K562 (cell line): ENCODE measurements at regions of chr19 and their contacts with region 1.

Region 1: DNA sequence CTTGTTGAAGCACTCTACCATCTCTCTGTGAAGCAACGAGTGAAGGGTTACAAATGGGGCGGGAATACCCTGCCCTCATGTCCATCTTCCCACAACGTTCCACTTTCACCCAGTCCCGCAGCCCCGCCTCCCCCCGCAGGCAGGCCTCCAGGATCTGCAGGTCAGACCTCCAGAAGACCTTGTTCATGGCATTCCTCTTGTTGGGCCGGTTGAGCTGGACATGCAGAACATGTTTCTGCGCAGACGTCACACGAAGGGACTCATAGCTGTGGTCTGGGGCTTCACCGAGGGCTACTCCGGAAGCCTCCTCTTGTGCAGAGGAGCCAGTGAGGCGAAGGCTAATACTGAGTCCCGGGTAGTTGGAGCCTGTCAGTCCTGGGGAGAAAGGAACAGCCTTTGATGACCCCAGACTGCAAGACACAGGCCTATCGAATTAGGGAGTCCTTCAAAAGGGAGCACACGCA is 420 bp downstream of the ECH1 start:
- DNase-seq: peak in 2 of 4 experiments; percentile 53 to 66
- ATAC-seq: peak; percentile 55
- H3K4me3 ChIP-seq: peak overlapping the region; percentile 39
- H3K27ac ChIP-seq: peak overlapping the region; percentile 82
- H3K4me1 ChIP-seq: peaks cover 13 to 29% of the 10 kb centered on the region in 2 experiments; a peak in 4 of 5 replicates
- H3K27me3 ChIP-seq: no peaks in the 10 kb centered on the region
- CTCF ChIP-seq: no peak
- EP300 ChIP-seq: no peak
- POLR2A ChIP-seq: no peak
- RAD21 ChIP-seq: no peak; a peak in 1 of 4 replicates

Region 2: GRCh38 chr19:38736413-38737280 is 94.5 kb before region 1 on chr19:
- CTCF ChIA-PET with region 1: no interaction called
- POLR2A ChIA-PET with region 1: no interaction called
- in situ Hi-C with region 1: no loop called
- intact Hi-C with region 1: loop called (anchors 5 kb)
- DNase-seq: peak; percentile 90 to 99 (median 98)
- ATAC-seq: peak; percentile 75
- H3K4me3 ChIP-seq: peak overlapping the region; percentile 49
- H3K27ac ChIP-seq: peak overlapping the region; percentile 66; the same call in 2 of the 3 replicates
- H3K4me1 ChIP-seq: peaks cover 19 to 58% of the 10 kb centered on the region in 2 experiments; a peak in 4 of 5 replicates
- H3K27me3 ChIP-seq: no peaks in the 10 kb centered on the region
- CTCF ChIP-seq: no peak
- EP300 ChIP-seq: no peak
- POLR2A ChIP-seq: no peak
- RAD21 ChIP-seq: no peak

Region 3: DNA sequence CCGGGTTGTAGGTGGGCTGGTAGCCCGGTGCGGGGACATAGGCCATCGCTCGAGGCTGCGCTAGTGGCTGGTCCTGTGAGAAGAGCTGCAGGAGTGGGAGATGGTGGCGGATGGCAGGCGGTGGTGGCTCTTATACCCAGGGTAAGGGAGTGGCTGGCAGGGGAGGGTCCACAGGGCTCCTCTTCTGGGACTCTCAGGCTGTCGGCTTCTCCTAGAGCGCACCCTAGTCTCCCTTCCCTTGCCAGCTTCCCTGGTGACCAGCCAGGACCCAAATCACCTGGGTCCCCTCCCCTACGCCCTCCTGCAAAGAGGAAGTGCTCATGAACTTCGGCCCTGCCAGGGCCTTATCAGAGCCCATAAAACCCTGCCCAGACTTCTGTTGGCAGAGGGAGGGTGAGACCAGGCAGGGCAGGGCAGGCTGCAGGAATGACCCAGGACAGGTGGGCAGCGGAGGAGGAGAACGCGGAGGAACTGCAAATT is 18.3 kb before region 1 on chr19 and contains the start of gene LGALS4:
- CTCF ChIA-PET with region 1: no interaction called
- POLR2A ChIA-PET with region 1: interaction called, 14 read pairs
- in situ Hi-C with region 1: no loop called
- intact Hi-C with region 1: no loop called
- DNase-seq: peak in 1 of 4 experiments; percentile 9
- ATAC-seq: no peak
- H3K4me3 ChIP-seq: no peak within 1 kb of the TSS
- H3K27ac ChIP-seq: no peak within 1 kb of the TSS
- H3K4me1 ChIP-seq: peaks cover 0 to 35% of the 10 kb centered on the region in 2 experiments; a peak in 2 of 5 replicates
- H3K27me3 ChIP-seq: no peaks in the 10 kb centered on the region
- CTCF ChIP-seq: no peak
- EP300 ChIP-seq: no peak
- POLR2A ChIP-seq: no peak
- RAD21 ChIP-seq: no peak
- polyA plus RNA-seq, gene LGALS4: 0.08 TPM in 1 of 2 experiments, not detected in the other

Region 4: GRCh38 chr19:38862321-38863059 is 31.3 kb after region 1 on chr19:
- CTCF ChIA-PET with region 1: no interaction called
- POLR2A ChIA-PET with region 1: no interaction called
- in situ Hi-C with region 1: no loop called
- intact Hi-C with region 1: no loop called
- DNase-seq: peak in 1 of 4 experiments; percentile 77
- ATAC-seq: peak; percentile 80
- H3K4me3 ChIP-seq: no peak overlapping the region
- H3K27ac ChIP-seq: peak overlapping the region; percentile 33; the same call in 2 of the 3 replicates
- H3K4me1 ChIP-seq: peaks cover 27 to 36% of the 10 kb centered on the region in 2 experiments
- H3K27me3 ChIP-seq: no peaks in the 10 kb centered on the region
- CTCF ChIP-seq: no peak
- EP300 ChIP-seq: peak; percentile 82
- POLR2A ChIP-seq: no peak
- RAD21 ChIP-seq: 0 out of 4 replicates have a peak, but pooled peaks of 1 of the 2 experiments have one; percentile 7

Region 5: DNA sequence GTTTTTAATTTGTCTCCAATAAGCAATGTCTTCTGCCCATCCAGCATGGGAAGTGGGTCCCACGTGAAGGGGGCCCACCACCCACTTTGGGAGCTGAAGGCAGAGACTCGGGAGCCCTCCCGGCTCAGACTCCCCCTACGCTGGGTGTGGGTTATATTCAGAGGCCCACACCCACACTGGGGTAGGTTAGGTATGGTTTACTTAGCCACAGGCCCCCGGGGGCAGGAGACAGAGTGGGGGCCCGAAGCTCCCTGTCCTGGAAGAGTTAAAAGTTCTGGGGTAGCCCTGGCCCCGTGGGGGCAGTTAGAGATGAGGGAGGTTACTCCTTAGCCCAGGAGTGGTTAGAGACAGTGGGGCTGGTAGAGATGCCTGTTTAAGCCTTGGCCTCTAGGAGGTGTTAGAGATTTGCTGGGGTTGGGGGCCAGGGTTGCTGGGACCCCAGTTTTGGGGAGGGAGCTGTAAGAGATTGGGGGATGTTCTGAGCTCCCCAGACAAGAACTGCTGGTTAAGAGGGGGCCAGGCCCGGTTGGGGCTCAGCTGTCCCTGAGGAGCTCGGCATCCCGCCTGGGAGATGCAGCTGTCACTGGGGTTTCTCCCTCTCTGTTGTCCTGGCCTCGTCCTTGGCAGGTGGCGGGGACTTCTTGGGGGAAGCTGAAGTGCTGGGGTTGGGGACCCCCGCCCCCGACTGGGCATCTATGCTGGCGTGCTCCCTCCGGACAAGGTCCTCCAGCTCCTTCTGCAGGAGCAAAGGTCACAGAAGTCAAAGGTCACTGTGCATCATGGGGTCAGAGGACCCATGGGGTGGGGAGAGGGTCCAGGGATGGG is 47.6 kb after region 1 on chr19:
- CTCF ChIA-PET with region 1: no interaction called
- POLR2A ChIA-PET with region 1: no interaction called
- in situ Hi-C with region 1: no loop called
- intact Hi-C with region 1: no loop called
- DNase-seq: no peak
- ATAC-seq: peak; percentile 13; the same call in 1 of the 3 replicates
- H3K4me3 ChIP-seq: no peak overlapping the region
- H3K27ac ChIP-seq: peak overlapping the region; percentile 8; the same call in 2 of the 3 replicates
- H3K4me1 ChIP-seq: peaks cover 21 to 60% of the 10 kb centered on the region in 2 experiments; a peak in 4 of 5 replicates
- H3K27me3 ChIP-seq: no peaks in the 10 kb centered on the region
- CTCF ChIP-seq: no peak
- EP300 ChIP-seq: no peak
- POLR2A ChIP-seq: no peak
- RAD21 ChIP-seq: no peak

Region 6: DNA sequence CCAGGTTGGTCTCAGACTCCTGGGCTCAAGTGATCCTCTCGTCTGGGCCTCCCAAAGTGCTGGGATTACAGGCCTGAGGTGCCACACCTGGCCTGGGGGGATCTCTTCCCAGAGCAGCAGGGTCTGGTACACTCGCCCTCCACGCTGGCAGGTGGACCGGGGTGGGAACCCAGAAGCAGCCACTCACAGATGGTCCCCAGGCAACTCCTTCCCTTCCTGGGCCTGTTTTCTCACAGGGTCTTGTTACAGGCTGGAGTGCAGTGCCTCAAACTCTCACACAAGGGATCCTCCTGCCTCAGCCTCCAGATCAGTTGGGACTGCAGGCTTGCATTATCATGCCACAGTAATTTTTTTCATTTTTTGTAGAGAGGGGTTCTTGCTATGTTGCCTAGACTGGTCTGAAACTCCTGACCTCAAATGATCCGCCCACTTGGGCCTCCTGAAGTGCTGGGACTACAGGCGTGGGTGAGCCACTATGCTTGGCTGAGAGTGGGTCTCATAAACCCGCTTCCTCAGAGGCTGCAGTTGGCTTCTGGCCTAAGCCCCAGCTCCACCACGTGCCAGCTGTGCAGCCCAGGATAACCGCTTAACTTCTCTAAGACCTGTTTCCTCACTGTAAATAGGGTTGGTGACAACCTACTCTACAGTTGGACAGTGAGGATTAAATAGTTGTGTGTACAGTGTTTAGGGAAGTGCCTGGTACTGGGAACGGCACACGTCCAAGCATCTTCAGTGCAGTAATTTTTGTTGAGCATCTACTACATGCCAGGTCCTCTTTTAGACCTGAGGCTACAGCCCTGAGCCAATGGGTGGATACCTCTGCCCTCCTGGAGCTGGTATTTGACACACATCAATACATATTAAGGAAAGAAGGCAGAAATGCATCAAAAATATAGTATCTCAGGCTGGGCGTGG is 81.7 kb after region 1 on chr19:
- CTCF ChIA-PET with region 1: no interaction called
- POLR2A ChIA-PET with region 1: no interaction called
- in situ Hi-C with region 1: no loop called
- intact Hi-C with region 1: no loop called
- DNase-seq: no peak
- ATAC-seq: no peak
- H3K4me3 ChIP-seq: no peak overlapping the region
- H3K27ac ChIP-seq: no peak overlapping the region
- H3K4me1 ChIP-seq: peaks cover 0 to 44% of the 10 kb centered on the region in 2 experiments; a peak in 3 of 5 replicates
- H3K27me3 ChIP-seq: no peaks in the 10 kb centered on the region
- CTCF ChIP-seq: no peak
- EP300 ChIP-seq: no peak
- POLR2A ChIP-seq: 0 out of 2 replicates have a peak, but pooled peaks have one; percentile 18
- RAD21 ChIP-seq: no peak